Caco-2 (cell line): ENCODE measurements at regions of chr2 and their contacts with region 1.

Region 1: GRCh38 chr2:204145263-204145751 is 208.7 kb downstream of the ICOS start:
- DNase-seq: peak; percentile 84 to 90
- H3K4me3 ChIP-seq: peak overlapping the region; percentile 45
- H3K4me3 Mint-ChIP-seq: peak overlapping the region; percentile 75
- H3K27ac Mint-ChIP-seq: peak overlapping the region; percentile 73
- H3K4me1 ChIP-seq: peaks cover 4% of the 10 kb centered on the region; the same call in 1 of the 2 replicates
- H3K4me1 Mint-ChIP-seq: no peaks in the 10 kb centered on the region
- H3K27me3 ChIP-seq: no peaks in the 10 kb centered on the region; the same call in 1 of the 2 replicates
- H3K27me3 Mint-ChIP-seq: peaks cover 19% of the 10 kb centered on the region
- CTCF ChIP-seq: peak; percentile 90 to 97

Region 2: GRCh38 chr2:204024503-204024902 is 120.8 kb before region 1 on chr2:
- CTCF ChIA-PET with region 1: interaction called, 11 read pairs
- POLR2A ChIA-PET with region 1: no interaction called
- intact Hi-C with region 1: loop called (anchors 1 kb)
- DNase-seq: peak; percentile 42 to 70
- H3K4me3 ChIP-seq: no peak overlapping the region
- H3K4me3 Mint-ChIP-seq: no peak overlapping the region
- H3K27ac Mint-ChIP-seq: no peak overlapping the region
- H3K4me1 ChIP-seq: no peaks in the 10 kb centered on the region
- H3K4me1 Mint-ChIP-seq: no peaks in the 10 kb centered on the region
- H3K27me3 ChIP-seq: no peaks in the 10 kb centered on the region
- H3K27me3 Mint-ChIP-seq: no peaks in the 10 kb centered on the region
- CTCF ChIP-seq: peak; percentile 65 to 75

Region 3: GRCh38 chr2:204089574-204089973 is 55.7 kb before region 1 on chr2:
- CTCF ChIA-PET with region 1: no interaction called
- POLR2A ChIA-PET with region 1: no interaction called
- intact Hi-C with region 1: no loop called
- DNase-seq: no peak
- H3K4me3 ChIP-seq: no peak overlapping the region
- H3K4me3 Mint-ChIP-seq: no peak overlapping the region
- H3K27ac Mint-ChIP-seq: no peak overlapping the region
- H3K4me1 ChIP-seq: no peaks in the 10 kb centered on the region
- H3K4me1 Mint-ChIP-seq: no peaks in the 10 kb centered on the region
- H3K27me3 ChIP-seq: no peaks in the 10 kb centered on the region
- H3K27me3 Mint-ChIP-seq: peaks cover 2% of the 10 kb centered on the region
- CTCF ChIP-seq: no peak

Region 4: GRCh38 chr2:204108330-204108751 is 37.0 kb before region 1 on chr2:
- CTCF ChIA-PET with region 1: no interaction called
- POLR2A ChIA-PET with region 1: no interaction called
- intact Hi-C with region 1: loop called (anchors 1 kb)
- DNase-seq: peak; percentile 48 to 54
- H3K4me3 ChIP-seq: no peak overlapping the region
- H3K4me3 Mint-ChIP-seq: no peak overlapping the region
- H3K27ac Mint-ChIP-seq: no peak overlapping the region
- H3K4me1 ChIP-seq: no peaks in the 10 kb centered on the region
- H3K4me1 Mint-ChIP-seq: peaks cover 19% of the 10 kb centered on the region
- H3K27me3 ChIP-seq: no peaks in the 10 kb centered on the region; the same call in 1 of the 2 replicates
- H3K27me3 Mint-ChIP-seq: peaks cover 4% of the 10 kb centered on the region
- CTCF ChIP-seq: peak; percentile 78 to 80

Region 5: DNA sequence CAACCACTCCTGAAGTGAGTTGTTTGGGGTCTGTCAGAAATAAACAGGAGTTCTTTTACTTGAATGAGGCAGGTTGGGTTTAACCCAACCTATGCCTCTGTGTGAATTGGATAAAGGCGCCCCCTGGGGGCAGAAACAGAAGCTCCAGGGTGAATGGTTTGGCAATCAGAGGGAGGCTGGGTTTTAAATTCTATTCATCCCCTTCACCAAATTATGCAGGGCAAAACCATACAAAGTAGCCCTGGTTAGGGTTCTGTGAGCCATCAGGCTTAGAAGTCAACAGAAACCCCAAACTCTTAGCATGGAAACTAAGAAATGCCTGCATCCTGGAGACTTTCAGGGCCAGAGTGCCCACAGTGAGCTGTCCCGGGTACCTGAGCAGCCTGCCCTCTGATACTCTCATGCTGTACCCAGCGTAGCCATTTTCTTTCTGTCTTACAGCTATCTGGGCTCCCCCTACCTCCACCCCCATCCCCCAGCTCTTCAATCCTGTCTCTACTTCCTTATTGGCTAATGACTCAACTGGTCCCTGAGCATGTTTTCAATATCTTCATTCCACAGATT is 32.8 kb after region 1 on chr2:
- CTCF ChIA-PET with region 1: interaction called, 21 read pairs
- POLR2A ChIA-PET with region 1: no interaction called
- intact Hi-C with region 1: loop called (anchors 1 kb)
- DNase-seq: peak; percentile 44 to 60
- H3K4me3 ChIP-seq: no peak overlapping the region
- H3K4me3 Mint-ChIP-seq: no peak overlapping the region
- H3K27ac Mint-ChIP-seq: no peak overlapping the region
- H3K4me1 ChIP-seq: no peaks in the 10 kb centered on the region
- H3K4me1 Mint-ChIP-seq: no peaks in the 10 kb centered on the region
- H3K27me3 ChIP-seq: peaks cover 2% of the 10 kb centered on the region
- H3K27me3 Mint-ChIP-seq: peaks cover 3% of the 10 kb centered on the region
- CTCF ChIP-seq: peak; percentile 56 to 65

Region 6: DNA sequence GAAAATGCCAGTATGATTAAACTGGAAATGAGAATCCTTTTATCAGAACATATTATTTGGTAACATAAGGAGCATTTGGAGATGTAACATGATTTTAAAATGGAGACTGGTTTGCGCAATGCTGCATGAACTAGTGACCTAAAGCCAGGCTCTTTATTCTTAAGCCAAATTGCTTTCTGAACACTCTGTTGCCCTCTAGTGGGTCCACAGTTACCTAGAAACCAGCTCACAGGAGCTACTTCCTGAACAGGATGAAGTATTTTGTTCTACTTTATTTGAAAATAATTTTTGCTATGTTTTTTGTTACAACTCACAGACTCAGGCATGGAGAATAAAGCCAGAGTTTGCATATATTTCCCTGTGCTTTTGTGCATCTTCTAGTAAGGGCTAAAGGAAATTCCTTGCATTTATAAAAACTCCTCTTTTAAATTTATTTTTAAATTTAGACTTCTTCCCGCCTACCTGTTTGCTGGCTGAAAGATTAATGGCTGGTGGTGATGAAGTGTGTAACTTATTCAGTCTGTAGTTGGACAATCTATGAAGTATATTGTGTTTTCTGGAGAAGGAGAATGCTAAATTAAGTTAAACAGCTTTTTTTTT is 546.7 kb after region 1 on chr2:
- CTCF ChIA-PET with region 1: no interaction called
- POLR2A ChIA-PET with region 1: no interaction called
- intact Hi-C with region 1: loop called (anchors 5 kb)
- DNase-seq: peak; percentile 79 to 81
- H3K4me3 ChIP-seq: no peak overlapping the region
- H3K4me3 Mint-ChIP-seq: no peak overlapping the region
- H3K27ac Mint-ChIP-seq: no peak overlapping the region
- H3K4me1 ChIP-seq: peaks cover 20% of the 10 kb centered on the region
- H3K4me1 Mint-ChIP-seq: peaks cover 29% of the 10 kb centered on the region
- H3K27me3 ChIP-seq: no peaks in the 10 kb centered on the region
- H3K27me3 Mint-ChIP-seq: no peaks in the 10 kb centered on the region
- CTCF ChIP-seq: peak; percentile 61 to 92